Activated B cell treated with CpG ODN at 0.5 μM for 24 hours (primary cell): ENCODE measurements at regions of chr9 and their contacts with region 1.

Region 1: GRCh38 chr9:20622330-20623020 is at the start of gene MLLT3:
- DNase-seq: peak; percentile 87
- ATAC-seq: peak; percentile 88
- H3K4me3 Mint-ChIP-seq: peak within 1 kb of the TSS; percentile 92
- H3K27ac Mint-ChIP-seq: peak within 1 kb of the TSS; percentile 80
- H3K4me1 Mint-ChIP-seq: peaks cover 37% of the 10 kb centered on the region
- H3K27me3 Mint-ChIP-seq: peaks cover 17% of the 10 kb centered on the region
- CTCF ChIP-seq: no peak
- total RNA-seq, gene MLLT3: 1.4 and 1.5 TPM in 2 replicates

Region 2: DNA sequence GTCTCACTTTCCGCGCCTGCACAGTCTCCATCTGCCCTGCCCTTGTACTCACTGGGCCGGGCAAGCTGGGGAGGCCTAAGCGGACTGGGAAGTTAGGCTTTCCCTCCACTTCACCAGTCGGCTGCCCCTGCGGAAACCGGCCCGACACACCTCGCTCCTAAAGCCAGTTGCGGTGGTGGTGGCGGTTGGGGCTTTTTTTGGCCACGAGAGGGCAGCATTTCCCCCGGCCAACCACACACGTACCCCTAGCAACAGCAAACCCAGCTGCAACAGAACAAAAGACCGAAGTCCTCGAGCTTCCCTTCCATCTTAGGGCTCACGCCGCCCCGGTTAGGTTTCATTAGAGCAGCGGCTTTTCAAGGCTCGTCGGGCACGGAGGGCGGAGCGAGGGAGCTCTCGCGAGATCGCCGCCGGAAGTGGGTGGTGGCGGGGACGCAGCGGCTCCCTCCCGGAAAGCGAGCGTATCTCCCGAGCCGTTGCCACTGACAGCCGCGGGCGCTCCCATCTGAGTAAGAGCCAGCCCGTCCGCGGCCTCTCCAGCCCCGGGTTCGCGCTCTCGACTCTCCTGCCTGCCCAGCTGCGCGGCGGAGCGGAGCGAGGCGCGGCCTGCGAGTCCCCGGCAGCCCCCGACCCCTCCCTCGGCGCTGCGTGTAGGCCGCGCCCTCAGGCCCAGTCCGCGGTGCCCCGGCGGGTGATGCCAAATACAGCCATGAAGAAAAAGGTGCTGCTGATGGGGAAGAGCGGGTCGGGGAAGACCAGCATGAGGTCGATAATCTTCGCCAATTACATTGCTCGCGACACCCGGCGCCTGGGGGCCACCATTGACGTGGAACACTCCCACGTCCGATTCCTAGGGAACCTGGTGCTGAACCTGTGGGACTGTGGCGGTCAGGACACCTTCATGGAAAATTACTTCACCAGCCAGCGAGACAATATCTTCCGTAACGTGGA is 1573.2 kb before region 1 on chr9 and contains the start of gene RRAGA:
- CTCF ChIA-PET with region 1: no interaction called
- POLR2A ChIA-PET with region 1: no interaction called
- intact Hi-C with region 1: loop called (anchors 2 kb)
- DNase-seq: peak; percentile 98
- ATAC-seq: peak; percentile 90
- H3K4me3 Mint-ChIP-seq: peak within 1 kb of the TSS; percentile 91
- H3K27ac Mint-ChIP-seq: peak within 1 kb of the TSS; percentile 97
- H3K4me1 Mint-ChIP-seq: peaks cover 46% of the 10 kb centered on the region
- H3K27me3 Mint-ChIP-seq: no peaks in the 10 kb centered on the region
- CTCF ChIP-seq: no peak
- total RNA-seq, gene RRAGA: 44.6 and 45.0 TPM in 2 replicates

Region 3: DNA sequence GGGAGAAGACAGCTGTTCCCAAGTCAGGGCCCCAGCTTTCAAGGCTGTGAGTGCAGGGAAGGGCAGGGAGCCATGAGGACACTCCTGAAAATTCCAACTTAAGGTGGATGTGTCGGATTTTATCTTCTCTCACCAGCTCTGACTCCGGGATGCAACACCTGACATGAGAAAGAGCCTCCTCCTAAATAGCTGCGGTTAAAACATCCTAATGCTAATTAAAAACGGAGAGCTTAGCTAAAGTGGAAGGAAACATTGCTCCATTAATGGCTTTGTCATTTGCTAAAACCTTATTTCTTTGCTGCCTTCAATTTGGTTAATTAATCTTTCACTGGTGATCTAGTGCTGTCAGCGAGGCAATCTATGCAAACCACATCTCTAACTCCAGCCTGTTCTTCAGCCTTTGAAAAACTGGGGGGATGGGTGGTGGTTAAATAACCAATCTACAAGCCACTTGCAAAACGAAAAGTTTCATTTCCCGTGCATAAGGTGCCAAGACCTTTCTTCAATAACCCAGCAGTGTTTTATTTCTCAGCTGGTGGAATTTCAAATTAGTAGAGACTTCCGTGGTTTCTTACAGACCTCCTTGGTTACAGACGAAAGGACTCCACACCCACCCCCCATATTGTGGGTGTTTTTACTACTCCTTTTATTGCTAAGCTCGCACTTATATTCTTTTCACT is 379.8 kb before region 1 on chr9:
- CTCF ChIA-PET with region 1: no interaction called
- POLR2A ChIA-PET with region 1: no interaction called
- intact Hi-C with region 1: loop called (anchors 2 kb)
- DNase-seq: no peak
- ATAC-seq: peak; percentile 57
- H3K4me3 Mint-ChIP-seq: peak overlapping the region; percentile 36
- H3K27ac Mint-ChIP-seq: no peak overlapping the region
- H3K4me1 Mint-ChIP-seq: peaks cover 24% of the 10 kb centered on the region
- H3K27me3 Mint-ChIP-seq: peaks cover 9% of the 10 kb centered on the region
- CTCF ChIP-seq: no peak

Region 4: GRCh38 chr9:20611751-20612287 is 10.7 kb before region 1 on chr9:
- CTCF ChIA-PET with region 1: interaction called, 5 read pairs
- POLR2A ChIA-PET with region 1: interaction called, 3 read pairs
- intact Hi-C with region 1: loop called (anchors 1 kb)
- DNase-seq: no peak
- ATAC-seq: no peak
- H3K4me3 Mint-ChIP-seq: no peak overlapping the region
- H3K27ac Mint-ChIP-seq: no peak overlapping the region
- H3K4me1 Mint-ChIP-seq: no peaks in the 10 kb centered on the region
- H3K27me3 Mint-ChIP-seq: peaks cover 12% of the 10 kb centered on the region
- CTCF ChIP-seq: no peak

Region 5: GRCh38 chr9:20884985-20885593 is 262.6 kb after region 1 on chr9:
- CTCF ChIA-PET with region 1: interaction called, 9 read pairs
- POLR2A ChIA-PET with region 1: no interaction called
- intact Hi-C with region 1: loop called (anchors 2 kb)
- DNase-seq: no peak
- ATAC-seq: no peak
- H3K4me3 Mint-ChIP-seq: no peak overlapping the region
- H3K27ac Mint-ChIP-seq: no peak overlapping the region
- H3K4me1 Mint-ChIP-seq: no peaks in the 10 kb centered on the region
- H3K27me3 Mint-ChIP-seq: no peaks in the 10 kb centered on the region
- CTCF ChIP-seq: no peak

Region 6: GRCh38 chr9:21110708-21111576 is 488.5 kb after region 1 on chr9:
- CTCF ChIA-PET with region 1: interaction called, 13 read pairs
- POLR2A ChIA-PET with region 1: no interaction called
- intact Hi-C with region 1: loop called (anchors 1 kb)
- DNase-seq: no peak
- ATAC-seq: peak; percentile 71
- H3K4me3 Mint-ChIP-seq: no peak overlapping the region
- H3K27ac Mint-ChIP-seq: no peak overlapping the region
- H3K4me1 Mint-ChIP-seq: no peaks in the 10 kb centered on the region
- H3K27me3 Mint-ChIP-seq: peaks cover 5% of the 10 kb centered on the region
- CTCF ChIP-seq: no peak

Region 7: GRCh38 chr9:22244141-22245011 is 1621.9 kb after region 1 on chr9:
- CTCF ChIA-PET with region 1: no interaction called
- POLR2A ChIA-PET with region 1: no interaction called
- intact Hi-C with region 1: loop called (anchors 10 kb)
- DNase-seq: no peak
- ATAC-seq: peak; percentile 54
- H3K4me3 Mint-ChIP-seq: no peak overlapping the region
- H3K27ac Mint-ChIP-seq: no peak overlapping the region
- H3K4me1 Mint-ChIP-seq: peaks cover 39% of the 10 kb centered on the region
- H3K27me3 Mint-ChIP-seq: peaks cover 15% of the 10 kb centered on the region
- CTCF ChIP-seq: no peak